CD14-positive monocyte (primary cell): ENCODE measurements at regions of chr12 and their contacts with region 1.

Region 1: DNA sequence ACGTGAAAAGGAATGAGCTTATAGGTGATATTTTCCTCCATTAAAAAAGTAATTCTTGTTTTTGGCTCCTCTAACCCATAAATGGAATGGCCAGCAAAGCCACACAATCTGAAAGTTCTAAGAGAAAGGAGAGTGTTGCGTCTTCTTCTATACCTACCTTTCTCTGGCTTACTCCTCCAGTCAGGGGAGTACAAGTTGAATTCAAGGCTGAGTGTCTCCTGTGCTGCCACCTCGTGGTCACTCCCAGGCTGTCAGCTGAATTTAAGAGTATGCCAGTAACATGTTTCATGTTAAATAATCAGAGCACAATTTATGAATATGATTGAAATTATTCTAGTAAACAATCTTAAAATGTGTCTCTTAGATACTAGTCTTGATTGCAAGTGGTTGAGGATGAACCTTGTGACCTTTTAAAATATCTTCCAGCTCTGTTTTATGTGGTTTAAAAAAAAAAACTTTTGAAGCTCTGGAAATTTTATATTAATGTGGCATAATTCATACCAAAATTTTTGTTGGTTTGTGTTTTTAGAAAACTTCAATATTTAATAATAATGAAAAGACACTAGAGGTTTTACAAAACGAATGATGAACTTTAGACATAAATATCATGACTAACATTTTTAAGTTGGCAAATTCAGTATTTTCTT is 31.7 kb downstream of the PTHLH start:
- DNase-seq: peak; percentile 11 to 33 (median 16)
- H3K4me3 ChIP-seq: no peak overlapping the region
- H3K4me3 Mint-ChIP-seq: no peak overlapping the region
- H3K27ac ChIP-seq: no peak overlapping the region
- H3K27ac Mint-ChIP-seq: no peak overlapping the region
- H3K4me1 ChIP-seq: peaks cover 4 to 13% of the 10 kb centered on the region in 2 donors
- H3K4me1 Mint-ChIP-seq: peaks cover 12% of the 10 kb centered on the region
- H3K27me3 ChIP-seq: peaks cover 0 to 3% of the 10 kb centered on the region in 2 donors
- H3K27me3 Mint-ChIP-seq: peaks cover 3 to 10% (median 3%) of the 10 kb centered on the region in 3 donors
- CTCF ChIP-seq: peak; percentile 81

Region 2: DNA sequence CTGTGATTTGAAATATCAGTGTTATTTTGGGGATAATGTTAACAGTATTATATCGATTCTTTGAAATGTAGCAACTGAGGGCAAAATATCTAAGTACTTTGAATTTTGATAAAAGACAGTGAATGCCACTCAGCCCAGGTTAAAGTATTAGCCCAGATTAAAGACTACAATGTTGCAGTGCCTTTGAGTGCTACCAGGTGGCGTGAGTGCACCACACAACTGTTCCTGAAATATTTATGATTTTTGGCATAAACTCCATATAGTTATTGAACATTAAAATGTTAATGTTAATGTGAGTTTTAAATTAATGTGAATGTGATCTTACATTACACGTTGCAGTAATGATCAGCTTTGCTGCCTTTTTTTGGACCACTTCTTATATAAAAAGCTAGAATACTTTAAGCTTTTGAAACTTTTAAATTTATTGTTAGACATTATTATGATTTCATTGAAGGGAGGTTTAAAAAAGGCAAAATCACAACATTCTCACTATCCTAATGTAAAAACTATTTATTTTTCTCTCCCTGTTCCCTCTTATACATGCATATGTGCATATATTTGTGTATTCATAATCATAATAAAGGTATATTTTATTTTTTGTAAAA is 207.7 kb before region 1 on chr12:
- intact Hi-C with region 1: loop called in 1 of 2 experiments (anchors 5 kb)
- DNase-seq: peak; percentile 3 to 20 (median 15)
- H3K4me3 ChIP-seq: no peak overlapping the region
- H3K4me3 Mint-ChIP-seq: no peak overlapping the region
- H3K27ac ChIP-seq: no peak overlapping the region
- H3K27ac Mint-ChIP-seq: no peak overlapping the region
- H3K4me1 ChIP-seq: no peaks in the 10 kb centered on the region
- H3K4me1 Mint-ChIP-seq: no peaks in the 10 kb centered on the region
- H3K27me3 ChIP-seq: no peaks in the 10 kb centered on the region
- H3K27me3 Mint-ChIP-seq: no peaks in the 10 kb centered on the region
- CTCF ChIP-seq: peak; percentile 61

Region 3: DNA sequence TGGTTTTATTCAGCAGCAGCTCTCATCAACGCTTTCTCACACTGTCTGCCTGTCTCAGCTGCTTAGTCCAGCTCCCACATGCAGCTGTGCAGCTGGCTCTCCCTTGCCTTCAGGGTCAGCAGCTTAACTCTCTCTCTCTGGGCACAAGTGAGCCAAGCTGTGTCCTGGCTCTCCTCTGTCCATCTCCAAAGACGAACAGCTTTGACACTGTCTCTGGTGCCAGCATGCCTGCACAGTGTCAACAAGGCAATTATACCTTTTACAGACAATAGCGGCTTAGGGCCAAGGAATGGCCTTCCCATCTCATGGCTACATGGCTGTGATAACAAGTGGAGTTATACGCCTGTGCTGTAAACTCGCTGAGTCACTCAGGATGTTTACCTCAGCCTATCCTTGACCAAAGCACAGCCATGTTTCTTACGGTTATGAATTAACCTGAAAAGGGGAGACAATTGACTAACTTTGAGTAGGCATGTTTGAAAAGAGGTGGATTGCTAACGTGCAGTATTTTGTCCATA is 122.4 kb before region 1 on chr12:
- intact Hi-C with region 1: no loop called
- DNase-seq: no peak
- H3K4me3 ChIP-seq: no peak overlapping the region
- H3K4me3 Mint-ChIP-seq: no peak overlapping the region
- H3K27ac ChIP-seq: no peak overlapping the region
- H3K27ac Mint-ChIP-seq: no peak overlapping the region
- H3K4me1 ChIP-seq: no peaks in the 10 kb centered on the region
- H3K4me1 Mint-ChIP-seq: peaks cover 5% of the 10 kb centered on the region
- H3K27me3 ChIP-seq: no peaks in the 10 kb centered on the region
- H3K27me3 Mint-ChIP-seq: peaks cover 3 to 5% (median 4%) of the 10 kb centered on the region in 3 donors
- CTCF ChIP-seq: no peak

Region 4: GRCh38 chr12:27960821-27961220 is 19.9 kb after region 1 on chr12:
- intact Hi-C with region 1: no loop called
- DNase-seq: no peak
- H3K4me3 ChIP-seq: no peak overlapping the region
- H3K4me3 Mint-ChIP-seq: no peak overlapping the region
- H3K27ac ChIP-seq: no peak overlapping the region
- H3K27ac Mint-ChIP-seq: no peak overlapping the region
- H3K4me1 ChIP-seq: no peaks in the 10 kb centered on the region
- H3K4me1 Mint-ChIP-seq: no peaks in the 10 kb centered on the region
- H3K27me3 ChIP-seq: peaks cover 13 to 38% of the 10 kb centered on the region in 2 donors
- H3K27me3 Mint-ChIP-seq: peaks cover 10 to 49% (median 21%) of the 10 kb centered on the region in 3 donors
- CTCF ChIP-seq: no peak